Posterior vena cava (tissue), 2 donors: ENCODE measurements at regions of chr7 and their contacts with region 1.

Region 1: DNA sequence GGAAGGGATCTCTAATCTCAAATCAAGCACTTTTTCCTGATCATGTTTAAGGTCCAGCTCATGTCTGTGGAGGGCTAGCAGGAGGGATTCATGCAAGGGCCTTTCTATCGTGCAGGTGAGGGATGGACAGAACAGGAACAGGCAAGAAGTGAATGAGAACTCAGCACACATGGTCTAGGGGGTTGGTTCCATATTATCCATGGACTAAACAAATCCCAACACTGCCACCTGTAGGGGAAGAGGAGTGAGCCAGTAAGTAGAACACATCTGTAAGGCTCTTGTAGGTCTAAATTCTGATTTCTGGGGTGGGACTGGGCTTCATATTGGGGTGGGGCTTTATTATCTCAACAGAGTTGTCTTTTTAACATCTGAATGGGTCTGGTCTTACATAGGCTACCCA is 138.0 kb upstream of the TARP start:
- DNase-seq: no peak

Region 2: DNA sequence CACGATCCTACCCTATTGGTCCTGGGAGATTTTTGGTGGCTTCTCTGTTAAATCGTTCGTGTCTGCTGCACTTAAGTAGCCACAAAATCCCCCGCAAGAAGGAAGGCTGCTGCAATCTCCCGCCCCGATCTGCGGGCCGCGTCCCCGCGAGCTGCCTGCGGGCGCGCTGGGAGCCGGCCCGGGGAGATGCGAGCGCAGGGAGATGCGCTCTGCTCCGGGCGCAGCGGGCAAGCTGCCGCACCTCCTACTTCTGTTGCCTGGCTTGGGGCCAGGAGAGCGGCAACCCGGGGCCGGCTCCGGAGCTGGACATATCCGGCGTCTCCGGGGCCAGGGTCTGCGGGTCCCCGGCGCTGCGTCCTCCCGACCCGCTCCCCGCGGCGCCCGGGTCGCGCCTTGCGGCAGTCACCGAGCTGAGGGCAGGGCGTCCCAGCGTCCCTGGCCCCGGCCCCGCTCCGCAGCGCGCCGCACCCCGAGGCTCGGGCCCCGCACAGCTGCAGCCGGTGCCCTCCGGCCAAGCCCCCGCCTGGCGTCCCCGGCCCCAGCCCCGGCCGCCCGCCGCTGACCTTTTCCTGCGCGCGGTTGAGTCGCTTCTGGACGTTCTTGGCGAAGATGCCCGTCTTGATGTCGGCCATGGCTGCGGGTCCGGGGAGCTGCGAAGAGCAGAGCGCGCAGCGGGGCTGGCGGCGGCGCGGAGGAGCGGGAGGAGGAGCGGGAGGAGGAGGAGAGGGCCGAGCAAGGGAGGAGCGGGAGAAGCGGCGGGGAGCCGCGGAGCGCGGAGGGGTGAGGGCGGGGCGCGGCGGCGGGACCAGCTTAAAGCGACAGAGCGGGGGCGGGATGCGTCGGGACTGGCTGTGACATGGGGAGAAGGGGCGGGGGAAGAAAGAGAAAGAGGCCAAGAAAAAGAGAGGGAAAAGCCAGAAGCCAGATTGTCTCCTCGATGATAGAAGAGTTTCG is 219.6 kb after region 1 on chr7 and contains the start of gene AMPH:
- intact Hi-C with region 1: loop called in 1 of 2 experiments (anchors 10 kb)
- DNase-seq: peak; percentile 82
- total RNA-seq, gene AMPH: 7.3 to 10.0 TPM